A549 (cell line): ENCODE measurements at regions of chr6 and their contacts with region 1.

Region 1: DNA sequence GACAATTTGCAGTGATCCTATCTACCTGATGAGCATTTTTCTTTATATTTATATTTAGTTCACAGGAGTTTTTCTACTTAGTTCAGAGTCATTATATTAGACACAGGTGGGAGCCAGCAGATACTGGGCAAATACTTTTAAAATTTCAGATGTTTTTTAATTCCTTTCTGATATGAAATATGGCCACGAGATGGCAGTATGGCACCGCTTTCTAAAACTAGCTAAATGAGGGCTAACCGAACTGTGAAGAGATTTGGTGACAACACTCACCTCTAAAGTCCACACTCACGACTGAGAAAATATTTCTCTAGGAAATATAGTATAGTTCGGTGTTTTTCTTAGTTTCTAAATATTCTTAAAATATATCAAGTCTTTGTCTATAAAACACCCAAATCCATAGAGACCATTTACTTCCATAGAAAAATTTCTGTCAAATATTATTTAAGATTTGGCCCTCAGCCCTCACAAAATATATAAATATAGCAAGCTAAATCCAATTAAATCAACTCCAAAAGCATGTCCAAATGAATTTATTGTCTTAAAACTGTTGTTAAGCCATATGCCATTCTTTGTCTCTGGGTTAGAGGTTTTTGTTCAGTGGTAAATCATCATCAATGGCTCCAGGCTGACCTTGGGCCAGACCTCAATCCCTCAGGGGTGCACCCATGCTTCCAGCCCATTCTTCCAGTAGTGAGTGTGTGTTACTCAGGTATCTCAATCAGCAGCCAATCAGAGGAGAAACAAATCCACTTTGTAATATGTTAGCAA is 63.6 kb downstream of the HUS1B start:
- DNase-seq: peak; percentile 16 to 39
- ATAC-seq: peak; percentile 30 to 55; a peak in 3 of 6 replicates
- H3K4me3 ChIP-seq: no peak overlapping the region
- H3K27ac ChIP-seq: no peak overlapping the region
- H3K4me1 ChIP-seq: no peaks in the 10 kb centered on the region
- CTCF ChIP-seq: peak; percentile 75
- EP300 ChIP-seq: no peak
- POLR2A ChIP-seq: no peak
- RAD21 ChIP-seq: peak; percentile 72 to 76

Region 2: DNA sequence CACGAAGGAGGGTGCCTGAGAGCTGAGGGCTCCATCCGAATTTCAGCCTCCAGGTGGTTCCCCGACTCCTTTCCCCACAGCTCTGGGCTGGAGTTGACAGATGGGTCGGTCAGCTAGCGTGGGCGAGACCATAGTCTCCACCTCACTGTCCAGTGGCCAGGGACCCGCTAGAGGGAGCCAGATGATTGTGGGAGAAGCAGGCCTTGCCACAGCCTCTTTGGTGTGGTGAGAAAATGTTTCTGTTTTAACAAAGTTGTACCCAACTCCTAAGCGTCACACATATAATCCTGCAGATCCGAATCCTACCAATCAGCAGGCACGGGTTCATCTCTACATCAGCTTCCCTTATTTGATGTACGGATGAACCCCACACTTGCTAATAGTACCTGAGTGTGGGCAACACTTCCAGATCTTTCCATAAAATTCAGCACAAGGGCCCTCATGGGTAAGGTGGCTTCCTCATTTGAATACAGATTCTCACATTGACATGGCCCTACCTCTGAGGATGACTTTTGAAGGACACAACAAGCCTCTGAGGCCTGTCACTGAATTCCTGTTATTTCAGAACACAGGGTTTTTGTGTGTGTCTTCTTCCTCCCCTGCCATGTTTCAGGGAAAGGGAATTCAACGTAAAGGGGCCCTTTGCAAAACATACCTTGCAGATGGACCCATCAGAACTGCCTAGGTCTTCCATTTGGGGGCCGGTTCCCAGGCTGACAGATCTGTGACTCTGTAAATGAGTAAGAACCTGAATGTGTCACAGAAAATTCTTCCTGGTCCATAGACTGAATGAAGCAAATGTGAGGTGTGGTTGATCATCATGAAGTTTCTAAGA is 404.3 kb before region 1 on chr6:
- CTCF ChIA-PET with region 1: interaction called, 13 read pairs
- POLR2A ChIA-PET with region 1: no interaction called
- DNase-seq: peak; percentile 73 to 74
- ATAC-seq: peak; percentile 95 to 99
- H3K4me3 ChIP-seq: no peak overlapping the region
- H3K27ac ChIP-seq: no peak overlapping the region
- H3K4me1 ChIP-seq: no peaks in the 10 kb centered on the region
- CTCF ChIP-seq: peak; percentile 80
- EP300 ChIP-seq: no peak
- POLR2A ChIP-seq: no peak
- RAD21 ChIP-seq: peak; percentile 86 to 90

Region 3: DNA sequence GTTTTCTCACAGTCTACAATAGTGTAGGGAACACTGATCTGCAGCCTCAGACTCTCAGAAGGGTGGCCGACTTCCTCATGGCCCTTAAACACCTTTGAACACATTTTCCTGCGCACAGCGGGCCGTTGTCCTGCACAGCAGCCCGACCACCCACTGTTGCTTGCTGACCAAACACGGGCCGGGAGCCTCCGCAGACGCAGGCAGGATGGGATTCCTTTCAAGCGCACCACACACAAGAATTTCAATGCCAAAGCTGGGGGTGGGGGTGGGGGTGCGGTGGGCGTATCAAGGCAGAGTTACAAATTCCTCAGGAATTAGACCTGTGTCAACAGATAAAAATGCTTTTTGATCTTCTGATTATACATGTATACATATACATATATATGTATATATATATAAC is 11.0 kb before region 1 on chr6:
- CTCF ChIA-PET with region 1: interaction called, 17 read pairs
- POLR2A ChIA-PET with region 1: no interaction called
- DNase-seq: no peak
- ATAC-seq: no peak
- H3K4me3 ChIP-seq: no peak overlapping the region
- H3K27ac ChIP-seq: no peak overlapping the region
- H3K4me1 ChIP-seq: no peaks in the 10 kb centered on the region; the same call in 2 of the 3 replicates
- CTCF ChIP-seq: no peak
- EP300 ChIP-seq: no peak
- POLR2A ChIP-seq: no peak
- RAD21 ChIP-seq: no peak

Region 4: DNA sequence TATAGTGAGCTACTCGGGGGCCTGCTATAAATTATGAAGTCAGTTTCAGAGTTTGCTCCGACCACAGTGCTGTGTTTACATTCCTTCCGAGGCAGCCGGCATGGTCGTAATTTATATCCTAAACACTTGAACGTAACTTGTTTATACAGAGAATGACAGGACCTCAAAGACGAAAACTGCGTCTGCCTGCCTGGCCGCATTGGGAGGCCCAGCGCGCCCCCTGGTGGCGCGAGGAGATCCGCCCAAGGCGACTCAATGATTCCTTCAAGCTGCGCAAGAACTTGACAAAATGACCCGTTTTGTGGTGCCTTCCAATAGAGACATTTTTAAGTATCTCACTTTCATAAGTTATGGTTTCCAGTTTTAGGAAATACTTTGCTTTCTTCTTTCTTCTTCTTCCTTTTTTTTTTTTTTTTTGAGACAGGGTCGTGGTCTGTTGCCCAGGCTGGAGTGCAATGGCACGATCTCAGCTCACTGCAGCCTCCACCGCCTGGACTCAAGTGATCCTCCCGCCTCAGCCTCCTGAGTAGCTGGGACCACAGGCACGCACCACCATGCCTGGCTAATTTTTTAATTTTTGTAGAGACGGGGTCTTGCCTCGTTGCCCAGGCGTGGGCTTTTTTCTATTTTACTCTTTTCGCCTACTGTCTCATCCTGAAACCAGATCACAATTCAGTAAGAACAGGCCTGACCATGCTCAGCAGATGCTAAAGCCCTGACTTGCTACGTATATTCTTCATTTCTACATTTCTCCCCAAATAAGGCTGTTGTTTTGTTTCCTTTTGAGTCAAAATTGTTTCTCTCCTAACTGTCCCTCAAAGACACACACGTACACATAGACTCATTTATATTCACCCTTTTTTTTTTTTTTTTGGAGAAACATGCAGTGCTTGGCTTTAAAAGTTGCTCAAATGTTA is 803.9 kb after region 1 on chr6:
- CTCF ChIA-PET with region 1: interaction called, 27 read pairs
- POLR2A ChIA-PET with region 1: no interaction called
- DNase-seq: peak; percentile 55 to 66
- ATAC-seq: peak; percentile 74 to 93
- H3K4me3 ChIP-seq: no peak overlapping the region
- H3K27ac ChIP-seq: no peak overlapping the region
- H3K4me1 ChIP-seq: peaks cover 7% of the 10 kb centered on the region; the same call in 2 of the 3 replicates
- CTCF ChIP-seq: peak; percentile 83
- EP300 ChIP-seq: no peak
- POLR2A ChIP-seq: no peak
- RAD21 ChIP-seq: peak; percentile 74 to 75

Region 5: DNA sequence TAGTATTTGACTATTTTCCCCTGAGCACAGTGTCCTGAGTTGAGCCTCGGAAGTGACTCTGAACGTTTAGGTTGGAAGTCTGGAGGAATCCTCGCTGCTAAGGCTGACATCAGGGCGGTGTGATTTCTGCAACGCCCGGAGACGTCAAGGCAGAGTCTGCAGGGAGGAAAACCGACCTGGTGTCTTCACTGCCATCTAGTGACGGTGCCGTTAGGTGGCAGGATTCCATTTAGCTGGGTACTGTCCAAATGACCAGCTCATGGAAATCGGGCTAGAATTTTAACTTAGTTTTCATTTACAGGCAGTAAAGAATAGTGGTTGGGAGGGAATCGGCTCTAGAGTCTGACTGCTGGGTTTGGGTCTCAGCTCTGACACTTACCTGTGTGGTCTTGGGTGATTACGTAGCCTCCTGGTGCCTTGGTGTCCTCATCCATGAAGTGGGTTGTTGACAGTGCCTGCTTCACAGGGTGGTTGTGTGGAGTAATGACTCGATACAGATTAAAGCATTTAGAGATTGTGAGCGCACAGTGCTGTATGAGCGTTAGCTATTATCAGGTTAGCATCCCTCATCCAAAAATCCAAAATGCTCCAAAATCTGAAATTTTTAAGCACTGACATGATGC is 831.1 kb after region 1 on chr6:
- CTCF ChIA-PET with region 1: interaction called, 18 read pairs
- POLR2A ChIA-PET with region 1: no interaction called
- DNase-seq: peak; percentile 58 to 63
- ATAC-seq: peak; percentile 95 to 99
- H3K4me3 ChIP-seq: no peak overlapping the region
- H3K27ac ChIP-seq: no peak overlapping the region
- H3K4me1 ChIP-seq: peaks cover 5% of the 10 kb centered on the region; the same call in 2 of the 3 replicates
- CTCF ChIP-seq: peak; percentile 57
- EP300 ChIP-seq: no peak
- POLR2A ChIP-seq: no peak
- RAD21 ChIP-seq: peak; percentile 49 to 58; a peak in 4 of 5 replicates

Region 6: DNA sequence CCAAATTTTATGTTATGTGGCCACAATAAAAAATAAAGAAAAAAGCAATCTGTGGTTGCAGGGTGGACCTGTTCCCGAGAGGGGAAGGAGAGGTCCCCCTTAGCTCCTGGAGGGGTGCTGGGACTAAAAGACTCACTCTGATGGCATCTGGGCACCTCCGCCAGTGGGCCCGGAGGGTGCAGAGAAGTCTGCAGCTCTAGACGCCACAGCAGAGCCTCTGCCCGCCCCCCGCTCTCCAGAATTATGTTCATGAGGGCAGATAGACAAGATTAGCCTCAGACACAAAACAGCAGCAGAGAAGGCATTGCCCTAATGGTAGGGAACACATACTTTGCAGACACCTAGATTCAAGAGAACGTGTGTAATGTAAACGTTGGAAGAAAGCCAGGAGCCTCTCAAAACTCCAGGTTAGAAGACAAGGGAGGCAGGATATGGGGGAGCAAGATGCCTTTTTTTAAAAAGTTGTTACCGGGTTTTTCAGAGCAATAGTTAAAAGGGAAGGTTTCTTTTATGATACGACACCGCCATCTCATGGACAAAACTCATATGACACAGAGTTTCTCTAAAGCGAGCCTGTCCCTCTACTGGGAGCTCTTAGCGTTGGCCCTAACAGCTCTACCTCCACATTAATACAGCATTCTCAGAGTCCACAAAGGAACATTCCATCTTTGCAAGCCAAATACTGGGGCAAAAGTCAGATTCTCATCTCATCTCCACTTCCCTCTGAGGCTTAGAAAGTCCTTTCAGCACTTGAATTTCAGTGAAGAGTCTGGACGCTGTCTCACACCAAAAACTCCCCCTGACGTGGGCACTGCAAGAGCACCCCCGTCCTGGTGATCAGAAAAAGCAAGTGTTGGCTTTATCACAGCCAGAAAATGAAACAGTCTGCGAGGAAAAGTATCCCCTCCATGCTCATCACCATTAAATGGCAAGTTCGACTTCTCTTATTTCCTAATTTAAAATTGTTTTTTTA is 843.3 kb after region 1 on chr6:
- CTCF ChIA-PET with region 1: interaction called, 29 read pairs
- POLR2A ChIA-PET with region 1: no interaction called
- DNase-seq: peak; percentile 61 to 62
- ATAC-seq: peak; percentile 96 to 98
- H3K4me3 ChIP-seq: no peak overlapping the region
- H3K27ac ChIP-seq: peak overlapping the region in 1 of 2 experiments; percentile 51; a peak in 3 of 6 replicates
- H3K4me1 ChIP-seq: peaks cover 5% of the 10 kb centered on the region; the same call in 2 of the 3 replicates
- CTCF ChIP-seq: peak; percentile 67
- EP300 ChIP-seq: no peak
- POLR2A ChIP-seq: no peak
- RAD21 ChIP-seq: peak; percentile 77 to 82